ENCODE measurements at regions of chr16 and their contacts with region 1.

Region 1: DNA sequence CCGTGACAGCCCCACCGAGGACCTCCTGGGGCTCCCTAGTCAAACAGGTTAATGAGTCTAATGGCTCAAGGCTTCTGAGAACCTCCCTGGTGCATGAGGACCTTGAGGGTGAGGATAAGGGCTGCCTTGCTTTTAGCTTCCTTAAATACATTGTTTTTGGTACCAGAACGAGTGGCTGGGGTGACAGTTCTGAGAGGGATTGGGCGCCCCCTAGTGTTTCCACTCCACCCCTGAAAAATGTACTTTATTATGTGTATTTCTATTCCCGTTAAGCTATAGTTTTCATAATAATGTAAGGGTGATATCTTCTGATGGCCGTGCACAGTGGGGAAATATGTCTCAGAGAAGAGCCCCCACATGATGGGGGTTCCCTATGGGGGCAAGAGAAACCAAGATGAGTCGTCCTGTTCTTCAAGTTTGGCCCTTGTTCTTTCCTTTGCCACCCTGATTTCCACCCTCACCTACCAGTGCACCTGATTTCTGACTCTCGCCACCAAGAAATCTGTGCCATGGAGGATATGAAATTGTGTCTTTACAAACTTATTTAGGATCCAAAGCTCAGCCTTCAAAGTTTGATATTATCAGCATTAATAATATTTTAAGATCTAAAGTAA is 14.5 kb upstream of the VWA3A start:
- DNase-seq: peak; percentile 79
- ATAC-seq: peak; percentile 58
- H3K4me3 Mint-ChIP-seq: no peak overlapping the region
- H3K27ac Mint-ChIP-seq: no peak overlapping the region
- H3K4me1 Mint-ChIP-seq: peaks cover 2% of the 10 kb centered on the region
- H3K27me3 Mint-ChIP-seq: no peaks in the 10 kb centered on the region

Region 2: DNA sequence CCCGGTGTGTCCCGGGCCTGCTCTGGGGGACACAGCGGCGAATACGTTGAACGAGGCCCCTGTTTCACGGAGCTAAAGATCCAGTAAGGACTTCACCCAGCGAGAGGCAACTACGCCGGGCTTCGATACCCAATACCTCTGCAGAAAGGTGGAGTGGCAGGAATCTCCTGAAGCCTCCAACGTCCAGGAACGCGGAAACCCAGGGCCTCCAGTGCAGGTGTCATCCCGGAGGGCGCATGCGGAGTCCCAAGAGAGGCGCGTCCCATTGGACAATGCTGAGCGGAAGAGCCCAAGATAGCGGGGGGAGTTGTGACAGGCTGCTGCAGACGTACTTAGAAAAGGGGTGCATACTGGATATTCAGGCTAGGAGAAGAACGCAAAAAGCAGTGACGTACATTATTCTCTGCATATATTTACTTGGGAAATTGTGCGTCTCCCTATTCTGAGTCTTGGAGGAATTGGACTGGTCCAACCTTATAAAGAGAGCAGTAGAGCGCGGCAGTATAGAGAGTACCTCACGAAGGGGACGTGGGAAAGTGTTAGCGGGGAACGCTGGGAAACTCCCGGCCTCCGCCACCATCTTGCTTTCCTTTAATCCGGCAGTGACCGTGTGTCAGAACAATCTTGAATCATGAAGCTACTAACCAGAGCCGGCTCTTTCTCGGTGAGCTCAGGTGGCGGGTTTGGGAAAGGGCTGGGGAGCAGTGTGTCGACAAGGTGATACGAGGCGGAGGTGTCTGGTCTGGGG is 124.8 kb before region 1 on chr16 and contains the start of gene UQCRC2:
- CTCF ChIA-PET with region 1: interaction called, 11 read pairs
- DNase-seq: peak; percentile 92
- ATAC-seq: peak; percentile 95
- H3K4me3 Mint-ChIP-seq: peak within 1 kb of the TSS; percentile 98
- H3K27ac Mint-ChIP-seq: peak within 1 kb of the TSS; percentile 92
- H3K4me1 Mint-ChIP-seq: peaks cover 61% of the 10 kb centered on the region
- H3K27me3 Mint-ChIP-seq: no peaks in the 10 kb centered on the region
- total RNA-seq, gene UQCRC2: 217 to 279 TPM

Region 3: GRCh38 chr16:21994856-21995465 is 82.8 kb before region 1 on chr16:
- CTCF ChIA-PET with region 1: interaction called, 296 read pairs
- DNase-seq: no peak
- ATAC-seq: no peak
- H3K4me3 Mint-ChIP-seq: no peak overlapping the region
- H3K27ac Mint-ChIP-seq: no peak overlapping the region
- H3K4me1 Mint-ChIP-seq: peaks cover 17% of the 10 kb centered on the region
- H3K27me3 Mint-ChIP-seq: no peaks in the 10 kb centered on the region

Region 4: DNA sequence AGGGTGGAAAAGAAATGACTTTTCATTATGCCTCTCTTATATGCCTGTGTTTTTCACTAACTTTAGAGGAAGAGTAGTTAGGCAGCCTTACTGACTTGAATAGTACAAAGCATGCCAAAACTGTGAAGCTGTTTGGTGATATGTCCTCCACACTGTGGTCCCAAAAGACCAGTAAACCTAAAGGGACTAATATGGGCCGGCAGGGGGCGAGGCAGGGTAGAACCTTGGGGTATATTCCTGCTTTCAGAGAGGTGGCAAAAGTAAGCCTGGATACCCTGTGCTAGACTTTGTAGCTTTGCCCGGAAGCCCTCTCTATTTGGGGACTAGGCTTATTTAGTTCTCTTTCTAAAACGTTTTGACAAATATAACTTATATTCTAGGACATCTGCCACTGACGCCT is 21.9 kb before region 1 on chr16:
- CTCF ChIA-PET with region 1: interaction called, 23 read pairs
- DNase-seq: no peak
- ATAC-seq: peak; percentile 29
- H3K4me3 Mint-ChIP-seq: no peak overlapping the region
- H3K27ac Mint-ChIP-seq: peak overlapping the region; percentile 70
- H3K4me1 Mint-ChIP-seq: peaks cover 31% of the 10 kb centered on the region
- H3K27me3 Mint-ChIP-seq: no peaks in the 10 kb centered on the region

Region 5: GRCh38 chr16:22089910-22090309 is 12.1 kb after region 1 on chr16:
- CTCF ChIA-PET with region 1: interaction called, 23 read pairs
- DNase-seq: no peak
- ATAC-seq: no peak
- H3K4me3 Mint-ChIP-seq: no peak overlapping the region
- H3K27ac Mint-ChIP-seq: no peak overlapping the region
- H3K4me1 Mint-ChIP-seq: no peaks in the 10 kb centered on the region
- H3K27me3 Mint-ChIP-seq: peaks cover under 1% of the 10 kb centered on the region

Region 6: GRCh38 chr16:22109258-22109898 is 31.6 kb after region 1 on chr16:
- CTCF ChIA-PET with region 1: interaction called, 12 read pairs
- DNase-seq: no peak
- ATAC-seq: no peak
- H3K4me3 Mint-ChIP-seq: no peak overlapping the region
- H3K27ac Mint-ChIP-seq: no peak overlapping the region
- H3K4me1 Mint-ChIP-seq: peaks cover 8% of the 10 kb centered on the region
- H3K27me3 Mint-ChIP-seq: peaks cover 12% of the 10 kb centered on the region

Measured in activated CD8-positive, alpha-beta memory T cell treated with anti-CD3 and anti-CD28 coated beads, Interleukin-2, amount 10 ng/mL, durations not matched to agents 7 days and 5 days (primary cell).